Gastrocnemius medialis (tissue), 4 donors: ENCODE measurements at regions of chr19 and their contacts with region 1.

Region 1: DNA sequence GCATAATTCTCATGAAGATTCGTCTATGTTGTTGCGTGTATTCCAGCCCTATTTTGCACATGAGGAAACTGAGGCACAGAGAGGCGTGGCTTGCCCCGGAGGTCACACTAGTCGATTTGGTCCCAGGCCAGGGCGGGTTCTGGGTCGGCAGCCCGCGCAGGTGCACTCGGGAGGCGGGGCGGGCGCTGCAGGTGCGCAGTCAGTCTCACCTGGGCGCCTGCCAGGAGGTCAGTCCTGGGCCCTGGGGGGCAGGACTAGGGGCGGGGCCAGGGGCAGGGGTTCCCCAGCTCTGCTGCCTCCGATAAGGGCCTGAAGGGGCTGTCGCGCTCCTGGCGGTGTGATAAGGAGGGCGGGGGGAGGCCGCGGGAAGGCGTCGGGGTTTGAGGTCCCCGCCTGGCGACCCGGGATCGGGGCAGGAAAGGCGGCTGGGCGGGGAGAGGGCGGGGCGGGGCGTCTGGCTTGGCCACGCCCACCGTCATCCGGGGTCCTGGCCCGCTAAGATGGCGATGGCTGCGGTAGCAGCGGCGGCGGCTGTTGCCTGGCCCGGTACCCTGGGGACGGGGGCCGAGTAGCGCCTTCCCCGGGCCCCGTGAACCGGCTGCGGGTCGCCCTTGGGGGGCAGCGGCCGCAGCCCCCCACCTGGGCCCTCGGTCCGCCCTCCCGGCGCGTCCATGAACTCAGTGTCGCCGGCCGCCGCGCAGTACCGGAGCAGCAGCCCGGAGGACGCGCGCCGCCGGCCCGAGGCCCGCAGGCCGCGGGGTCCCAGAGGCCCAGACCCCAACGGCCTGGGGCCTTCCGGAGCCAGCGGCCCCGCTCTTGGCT is at the start of gene ATG4D:
- DNase-seq: peak; percentile 60 to 74
- ATAC-seq: peak; percentile 86 to 94
- H3K4me3 ChIP-seq: peak within 1 kb of the TSS; percentile 68 to 94 (median 79)
- H3K27ac ChIP-seq: peak within 1 kb of the TSS; percentile 89 to 96 (median 92)
- H3K4me1 ChIP-seq: peaks cover 15 to 18% of the 10 kb centered on the region in 2 donors
- H3K27me3 ChIP-seq: no peaks in the 10 kb centered on the region
- CTCF ChIP-seq: no peak
- POLR2A ChIP-seq: peak; percentile 70 to 85
- total RNA-seq, gene ATG4D: 67.6 to 127 (median 96.0) TPM

Region 2: GRCh38 chr19:10412257-10412977 is 131.2 kb before region 1 on chr19:
- in situ Hi-C with region 1: no loop called
- intact Hi-C with region 1: no loop called
- DNase-seq: no peak
- ATAC-seq: no peak
- H3K4me3 ChIP-seq: no peak overlapping the region
- H3K27ac ChIP-seq: no peak overlapping the region
- H3K4me1 ChIP-seq: peaks cover 13 to 21% of the 10 kb centered on the region in 2 donors
- H3K27me3 ChIP-seq: peaks cover 5 to 10% (median 7%) of the 10 kb centered on the region in 3 donors
- CTCF ChIP-seq: no peak
- POLR2A ChIP-seq: no peak

Region 3: GRCh38 chr19:10486538-10486937 is 57.1 kb before region 1 on chr19:
- in situ Hi-C with region 1: loop called in 1 of 4 experiments (anchors 10 kb)
- intact Hi-C with region 1: no loop called
- DNase-seq: no peak
- ATAC-seq: no peak
- H3K4me3 ChIP-seq: no peak overlapping the region
- H3K27ac ChIP-seq: peak overlapping the region in 1 of 4 donors; percentile 27
- H3K4me1 ChIP-seq: peaks cover 5 to 10% of the 10 kb centered on the region in 2 donors
- H3K27me3 ChIP-seq: no peaks in the 10 kb centered on the region
- CTCF ChIP-seq: no peak
- POLR2A ChIP-seq: no peak

Region 4: GRCh38 chr19:10502524-10503001 is 41.1 kb before region 1 on chr19:
- in situ Hi-C with region 1: no loop called
- intact Hi-C with region 1: loop called (anchors 2 kb)
- DNase-seq: peak; percentile 89 to 94
- ATAC-seq: peak; percentile 79 to 89
- H3K4me3 ChIP-seq: peak overlapping the region; percentile 77 to 96 (median 92)
- H3K27ac ChIP-seq: peak overlapping the region; percentile 96 to 100 (median 98)
- H3K4me1 ChIP-seq: peaks cover 30 to 39% of the 10 kb centered on the region in 2 donors
- H3K27me3 ChIP-seq: no peaks in the 10 kb centered on the region
- CTCF ChIP-seq: peak in 2 of 5 experiments; percentile 25 to 41
- POLR2A ChIP-seq: peak; percentile 82 to 84

Region 5: DNA sequence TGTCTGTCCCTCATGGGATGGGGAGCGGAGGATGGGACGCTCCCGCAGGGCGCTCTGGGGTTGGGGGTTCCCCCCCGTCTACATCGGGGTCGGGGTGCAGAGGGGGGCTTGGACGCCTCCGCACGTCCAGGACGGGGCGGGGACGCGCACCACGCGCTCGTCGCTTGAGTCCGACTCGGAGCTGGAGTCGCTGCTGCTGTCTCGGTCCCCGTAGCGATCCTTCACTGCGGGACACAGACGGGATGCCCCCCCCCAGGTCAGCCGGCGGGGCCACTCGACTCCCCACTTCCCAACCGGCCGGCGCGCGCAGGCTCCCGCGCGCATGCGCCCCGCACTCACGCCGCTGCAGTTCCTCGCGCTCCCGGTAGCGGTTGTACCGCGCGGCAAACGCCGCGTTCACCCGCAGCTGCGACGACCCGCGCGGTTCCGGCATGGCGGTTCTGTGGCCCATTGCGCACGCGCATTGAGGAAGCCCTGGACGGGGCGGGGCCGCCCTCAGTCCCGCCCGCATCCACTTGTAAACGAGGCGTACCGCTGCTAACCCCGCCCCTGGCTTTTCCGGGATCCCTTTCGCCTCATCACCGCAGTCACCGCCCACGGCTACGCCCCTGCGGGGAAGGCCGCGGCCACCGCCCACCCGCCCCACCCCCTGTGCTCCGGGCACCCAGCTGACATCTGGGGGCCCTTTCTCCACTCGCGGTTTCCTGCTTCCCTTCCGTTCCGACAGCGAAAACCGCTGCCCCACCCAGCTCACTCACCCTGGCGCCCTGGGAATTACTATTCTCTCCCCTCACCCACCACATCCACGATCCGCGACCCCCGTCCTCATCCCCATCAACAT is 22.2 kb after region 1 on chr19 and contains the start of gene KRI1:
- in situ Hi-C with region 1: no loop called
- intact Hi-C with region 1: loop called (anchors 1 kb)
- DNase-seq: peak; percentile 97
- ATAC-seq: peak; percentile 77 to 80
- H3K4me3 ChIP-seq: peak within 1 kb of the TSS; percentile 68 to 94 (median 86)
- H3K27ac ChIP-seq: peak within 1 kb of the TSS; percentile 84 to 92 (median 92)
- H3K4me1 ChIP-seq: peaks cover 34 to 35% of the 10 kb centered on the region in 2 donors
- H3K27me3 ChIP-seq: no peaks in the 10 kb centered on the region
- CTCF ChIP-seq: peak; percentile 34 to 75 (median 55)
- POLR2A ChIP-seq: peak; percentile 80 to 94
- total RNA-seq, gene KRI1: 16.8 to 24.1 (median 19.9) TPM

Region 6: DNA sequence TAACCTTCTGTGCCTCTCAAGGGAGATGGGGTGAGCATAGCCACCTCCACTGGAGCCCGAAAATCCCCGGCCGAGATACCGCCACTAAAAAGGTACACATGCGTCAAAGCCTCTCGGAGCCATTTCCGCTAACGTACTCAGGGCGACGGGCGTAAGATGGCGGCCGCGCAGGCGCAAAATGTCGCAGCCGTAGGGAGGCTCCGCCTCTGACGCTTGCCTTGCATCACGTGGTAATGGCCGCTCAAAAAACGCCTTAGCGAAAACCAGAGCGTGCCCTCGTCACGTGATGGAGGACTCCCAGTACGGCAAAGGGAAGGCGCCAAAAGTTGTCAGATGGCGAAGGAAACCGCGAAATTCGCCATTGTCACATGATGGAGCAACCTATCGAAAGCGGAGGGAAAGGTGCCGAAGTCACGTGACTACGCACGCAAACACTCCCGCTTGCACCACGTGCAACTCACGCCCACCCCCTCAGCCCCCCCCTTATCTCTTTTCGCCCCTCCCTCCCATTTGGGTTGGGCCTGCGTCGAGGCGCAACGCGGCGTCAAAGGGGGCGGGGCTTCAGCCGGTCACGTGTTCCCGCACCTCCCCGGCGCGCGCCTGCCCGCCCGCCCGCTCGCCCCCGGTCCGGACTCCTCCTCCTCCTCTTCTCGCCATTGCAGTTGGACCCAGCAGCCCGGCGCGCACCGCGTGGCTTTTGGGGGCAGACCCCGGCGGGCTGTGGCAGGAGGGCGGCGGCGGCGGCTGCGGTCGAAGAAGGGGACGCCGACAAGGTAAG is 110.3 kb after region 1 on chr19 and contains the start of gene ILF3:
- in situ Hi-C with region 1: no loop called
- intact Hi-C with region 1: no loop called
- DNase-seq: peak; percentile 100
- ATAC-seq: peak; percentile 86 to 90
- H3K4me3 ChIP-seq: peak within 1 kb of the TSS; percentile 85 to 99 (median 97)
- H3K27ac ChIP-seq: peak within 1 kb of the TSS; percentile 99 to 100 (median 99)
- H3K4me1 ChIP-seq: peaks cover 31 to 45% of the 10 kb centered on the region in 2 donors
- H3K27me3 ChIP-seq: no peaks in the 10 kb centered on the region
- CTCF ChIP-seq: peak in 2 of 5 experiments; percentile 68 to 82
- POLR2A ChIP-seq: peak; percentile 85 to 91
- total RNA-seq, gene ILF3: 67.3 to 88.2 (median 76.6) TPM